MCF 10A (cell line): ENCODE measurements at regions of chr13 and their contacts with region 1.

Region 1: GRCh38 chr13:95536632-95537241 is 15.8 kb upstream of the CLDN10 start:
- DNase-seq: peak; percentile 68
- H3K4me3 Mint-ChIP-seq: no peak overlapping the region
- H3K27ac Mint-ChIP-seq: no peak overlapping the region
- H3K4me1 Mint-ChIP-seq: peaks cover 30% of the 10 kb centered on the region
- H3K27me3 Mint-ChIP-seq: no peaks in the 10 kb centered on the region
- CTCF ChIP-seq: peak; percentile 42

Region 2: GRCh38 chr13:95181586-95181985 is 355.2 kb before region 1 on chr13:
- CTCF ChIA-PET with region 1: interaction called, 4 read pairs
- POLR2A ChIA-PET with region 1: no interaction called
- intact Hi-C with region 1: loop called (anchors 5 kb)
- DNase-seq: no peak
- H3K4me3 Mint-ChIP-seq: no peak overlapping the region
- H3K27ac Mint-ChIP-seq: no peak overlapping the region
- H3K4me1 Mint-ChIP-seq: peaks cover 8% of the 10 kb centered on the region
- H3K27me3 Mint-ChIP-seq: no peaks in the 10 kb centered on the region
- CTCF ChIP-seq: no peak

Region 3: DNA sequence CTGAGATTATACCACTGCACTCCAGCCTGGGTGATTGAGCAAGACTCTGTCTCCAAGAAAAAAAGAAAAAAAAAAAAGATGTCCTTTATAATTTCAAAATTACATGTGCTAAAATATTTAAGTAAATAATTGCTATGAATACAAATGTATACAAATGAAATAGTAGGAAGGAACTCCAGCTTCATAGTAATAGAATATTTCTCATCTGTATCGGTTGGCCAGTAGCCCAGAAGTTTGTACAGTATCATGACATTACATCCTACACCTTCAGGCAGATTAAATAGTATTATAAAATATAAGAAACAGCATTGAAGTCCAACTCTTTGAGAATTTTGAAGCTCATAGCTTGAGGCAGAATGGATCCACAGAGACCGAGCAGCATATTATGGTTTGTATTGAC is 20.7 kb before region 1 on chr13:
- CTCF ChIA-PET with region 1: interaction called, 25 read pairs
- POLR2A ChIA-PET with region 1: interaction called, 3 read pairs
- intact Hi-C with region 1: no loop called
- DNase-seq: peak; percentile 83
- H3K4me3 Mint-ChIP-seq: no peak overlapping the region
- H3K27ac Mint-ChIP-seq: no peak overlapping the region
- H3K4me1 Mint-ChIP-seq: no peaks in the 10 kb centered on the region
- H3K27me3 Mint-ChIP-seq: no peaks in the 10 kb centered on the region
- CTCF ChIP-seq: no peak

Region 4: DNA sequence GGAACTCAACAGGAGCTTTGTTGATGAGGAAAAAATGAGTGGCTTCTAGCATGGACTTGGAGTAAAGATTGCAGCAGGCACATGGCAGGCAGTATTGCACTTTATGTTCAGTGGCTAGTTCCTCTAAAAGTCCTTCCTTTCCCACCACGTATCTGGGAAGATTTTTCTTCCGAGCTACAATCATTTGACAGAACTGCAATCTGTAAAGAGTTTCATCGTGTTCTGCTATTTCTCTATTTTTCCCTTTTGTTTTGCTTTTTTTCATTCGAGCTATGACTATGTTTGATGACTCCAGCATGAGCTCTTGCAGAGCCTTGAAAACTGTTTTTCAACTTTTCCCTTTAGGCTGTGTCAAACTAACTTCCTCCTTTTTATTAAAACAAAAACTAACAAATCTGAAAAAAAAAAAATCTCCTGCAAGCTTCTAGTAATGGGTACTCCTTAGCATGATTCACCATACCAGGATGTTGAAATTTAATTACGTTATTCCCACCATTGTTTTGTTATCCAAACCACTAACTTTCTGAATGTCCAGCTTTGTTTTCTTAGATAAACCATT is 28.1 kb after region 1 on chr13:
- CTCF ChIA-PET with region 1: interaction called, 52 read pairs
- POLR2A ChIA-PET with region 1: interaction called, 10 read pairs
- intact Hi-C with region 1: loop called (anchors 2 kb)
- DNase-seq: peak; percentile 92
- H3K4me3 Mint-ChIP-seq: peak overlapping the region; percentile 56
- H3K27ac Mint-ChIP-seq: peak overlapping the region; percentile 17
- H3K4me1 Mint-ChIP-seq: peaks cover 26% of the 10 kb centered on the region
- H3K27me3 Mint-ChIP-seq: no peaks in the 10 kb centered on the region
- CTCF ChIP-seq: no peak

Region 5: GRCh38 chr13:95614641-95615245 is 78.0 kb after region 1 on chr13:
- CTCF ChIA-PET with region 1: interaction called, 29 read pairs
- POLR2A ChIA-PET with region 1: no interaction called
- intact Hi-C with region 1: loop called (anchors 2 kb)
- DNase-seq: peak; percentile 18
- H3K4me3 Mint-ChIP-seq: no peak overlapping the region
- H3K27ac Mint-ChIP-seq: peak overlapping the region; percentile 63
- H3K4me1 Mint-ChIP-seq: no peaks in the 10 kb centered on the region
- H3K27me3 Mint-ChIP-seq: no peaks in the 10 kb centered on the region
- CTCF ChIP-seq: no peak

Region 6: DNA sequence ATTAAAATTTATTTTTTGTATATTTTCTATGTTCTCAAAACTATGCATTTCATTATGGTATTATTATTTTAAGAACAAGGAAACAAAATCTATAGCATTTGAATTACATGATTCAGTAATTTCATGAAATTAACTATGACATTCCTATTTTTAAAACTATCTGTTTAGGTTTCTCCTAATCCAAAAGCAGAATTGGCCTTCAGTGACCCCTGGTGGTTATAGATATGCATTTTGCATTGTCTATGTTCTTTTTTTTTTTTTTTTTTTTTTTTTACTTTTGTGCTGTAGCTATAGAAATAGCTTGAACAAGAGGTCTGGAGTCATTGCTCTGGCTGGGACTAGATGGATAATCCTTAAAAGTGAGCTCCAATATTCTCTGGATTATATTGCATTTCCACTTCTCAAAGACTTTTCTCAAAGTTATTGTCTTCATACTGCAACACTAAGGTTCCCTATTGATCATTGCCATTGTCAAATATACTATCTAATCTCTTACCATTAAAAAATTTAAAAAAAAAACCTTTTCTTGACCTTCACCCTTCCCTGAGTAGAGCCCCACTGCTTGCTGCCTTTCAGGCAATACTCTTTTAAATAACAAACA is 124.3 kb after region 1 on chr13:
- CTCF ChIA-PET with region 1: interaction called, 44 read pairs
- POLR2A ChIA-PET with region 1: interaction called, 3 read pairs
- intact Hi-C with region 1: loop called (anchors 1 kb)
- DNase-seq: peak; percentile 88
- H3K4me3 Mint-ChIP-seq: no peak overlapping the region
- H3K27ac Mint-ChIP-seq: no peak overlapping the region
- H3K4me1 Mint-ChIP-seq: no peaks in the 10 kb centered on the region
- H3K27me3 Mint-ChIP-seq: no peaks in the 10 kb centered on the region
- CTCF ChIP-seq: peak; percentile 59

Region 7: GRCh38 chr13:95874286-95874685 is 337.5 kb after region 1 on chr13:
- CTCF ChIA-PET with region 1: no interaction called
- POLR2A ChIA-PET with region 1: no interaction called
- intact Hi-C with region 1: no loop called
- DNase-seq: no peak
- H3K4me3 Mint-ChIP-seq: no peak overlapping the region
- H3K27ac Mint-ChIP-seq: no peak overlapping the region
- H3K4me1 Mint-ChIP-seq: no peaks in the 10 kb centered on the region
- H3K27me3 Mint-ChIP-seq: no peaks in the 10 kb centered on the region
- CTCF ChIP-seq: no peak